Activated B cell treated with CpG ODN at 0.5 μM for 24 hours (primary cell): ENCODE measurements at regions of chr4 and their contacts with region 1.

Region 1: DNA sequence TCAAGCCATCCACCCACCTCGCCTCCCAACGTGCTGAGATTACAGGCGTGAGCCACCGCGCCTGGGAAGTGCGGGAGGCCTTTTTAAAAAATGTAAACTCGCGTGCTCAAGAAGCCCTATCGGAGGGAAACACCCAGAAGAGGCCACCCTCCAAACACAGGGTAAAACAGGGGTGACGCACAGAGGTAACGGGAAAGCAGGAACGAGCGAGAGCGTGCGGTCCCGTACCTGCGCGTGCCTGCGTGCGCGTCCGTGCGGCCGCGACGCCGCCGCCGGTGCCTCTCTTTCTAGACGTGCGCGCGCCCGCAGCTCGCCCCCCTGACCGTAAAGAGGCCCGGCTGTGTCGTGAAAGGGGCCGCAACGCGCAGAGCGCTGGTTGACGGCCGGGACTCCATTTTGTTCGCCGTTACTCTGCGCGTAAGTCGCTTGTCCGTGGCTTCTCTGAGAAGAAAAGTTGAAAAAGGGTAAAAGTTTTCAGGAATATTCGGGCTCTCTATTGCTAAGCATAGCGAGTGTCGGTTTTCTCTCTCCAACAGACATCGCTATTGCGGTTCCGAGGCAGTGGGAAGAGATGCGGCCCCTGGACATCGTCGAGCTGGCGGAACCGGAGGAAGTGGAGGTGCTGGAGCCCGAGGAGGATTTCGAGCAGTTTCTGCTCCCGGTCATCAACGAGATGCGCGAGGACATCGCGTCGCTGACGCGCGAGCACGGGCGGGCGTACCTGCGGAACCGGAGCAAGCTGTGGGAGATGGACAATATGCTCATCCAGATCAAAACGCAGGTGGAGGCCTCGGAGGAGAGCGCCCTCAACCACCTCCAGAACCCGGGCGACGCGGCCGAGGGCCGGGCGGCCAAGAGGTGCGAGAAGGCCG is at the start of gene MRFAP1:
- DNase-seq: peak; percentile 91
- ATAC-seq: peak; percentile 84
- H3K4me3 Mint-ChIP-seq: peak within 1 kb of the TSS; percentile 99
- H3K27ac Mint-ChIP-seq: peak within 1 kb of the TSS; percentile 100
- H3K4me1 Mint-ChIP-seq: peaks cover 36% of the 10 kb centered on the region
- H3K27me3 Mint-ChIP-seq: no peaks in the 10 kb centered on the region
- CTCF ChIP-seq: no peak
- total RNA-seq, gene MRFAP1: 93.8 and 93.9 TPM in 2 replicates

Region 2: DNA sequence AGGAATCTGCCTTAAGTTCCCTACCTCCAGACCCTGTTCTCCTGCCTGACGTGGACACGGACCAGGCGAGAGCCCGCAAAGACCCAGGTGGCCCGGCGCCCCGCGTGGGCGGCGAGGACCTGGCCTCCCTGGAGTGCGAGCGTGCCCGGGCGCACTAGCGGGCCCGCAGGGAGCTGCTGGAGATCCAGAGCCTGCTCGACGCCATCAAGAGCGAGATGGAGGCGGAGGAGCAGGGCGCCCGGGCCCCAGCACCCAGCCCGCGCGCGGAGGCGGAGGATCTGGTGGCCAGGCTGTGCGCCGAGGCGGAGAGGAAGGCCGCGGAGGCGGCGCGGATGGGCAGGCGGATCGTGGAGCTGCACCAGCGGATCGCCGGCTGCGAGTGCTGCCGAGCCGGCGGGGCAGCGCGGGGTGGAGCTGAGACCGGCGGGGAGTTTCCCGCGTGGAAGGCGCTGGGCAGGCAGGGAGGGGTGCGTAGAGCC is 18.1 kb after region 1 on chr4:
- CTCF ChIA-PET with region 1: no interaction called
- POLR2A ChIA-PET with region 1: interaction called, 29 read pairs
- intact Hi-C with region 1: loop called (anchors 2 kb)
- DNase-seq: no peak
- ATAC-seq: peak; percentile 81
- H3K4me3 Mint-ChIP-seq: peak overlapping the region; percentile 71
- H3K27ac Mint-ChIP-seq: no peak overlapping the region
- H3K4me1 Mint-ChIP-seq: peaks cover 3% of the 10 kb centered on the region
- H3K27me3 Mint-ChIP-seq: peaks cover 18% of the 10 kb centered on the region
- CTCF ChIP-seq: no peak

Region 3: GRCh38 chr4:6709230-6710114 is 68.9 kb after region 1 on chr4 and contains the start of gene MRFAP1L1:
- CTCF ChIA-PET with region 1: no interaction called
- POLR2A ChIA-PET with region 1: interaction called, 57 read pairs
- intact Hi-C with region 1: loop called (anchors 1 kb)
- DNase-seq: peak; percentile 93
- ATAC-seq: peak; percentile 84
- H3K4me3 Mint-ChIP-seq: peak within 1 kb of the TSS; percentile 99
- H3K27ac Mint-ChIP-seq: peak within 1 kb of the TSS; percentile 96
- H3K4me1 Mint-ChIP-seq: peaks cover 64% of the 10 kb centered on the region
- H3K27me3 Mint-ChIP-seq: peaks cover 3% of the 10 kb centered on the region
- CTCF ChIP-seq: no peak
- total RNA-seq, gene MRFAP1L1: 39.1 and 39.5 TPM in 2 replicates

Region 4: DNA sequence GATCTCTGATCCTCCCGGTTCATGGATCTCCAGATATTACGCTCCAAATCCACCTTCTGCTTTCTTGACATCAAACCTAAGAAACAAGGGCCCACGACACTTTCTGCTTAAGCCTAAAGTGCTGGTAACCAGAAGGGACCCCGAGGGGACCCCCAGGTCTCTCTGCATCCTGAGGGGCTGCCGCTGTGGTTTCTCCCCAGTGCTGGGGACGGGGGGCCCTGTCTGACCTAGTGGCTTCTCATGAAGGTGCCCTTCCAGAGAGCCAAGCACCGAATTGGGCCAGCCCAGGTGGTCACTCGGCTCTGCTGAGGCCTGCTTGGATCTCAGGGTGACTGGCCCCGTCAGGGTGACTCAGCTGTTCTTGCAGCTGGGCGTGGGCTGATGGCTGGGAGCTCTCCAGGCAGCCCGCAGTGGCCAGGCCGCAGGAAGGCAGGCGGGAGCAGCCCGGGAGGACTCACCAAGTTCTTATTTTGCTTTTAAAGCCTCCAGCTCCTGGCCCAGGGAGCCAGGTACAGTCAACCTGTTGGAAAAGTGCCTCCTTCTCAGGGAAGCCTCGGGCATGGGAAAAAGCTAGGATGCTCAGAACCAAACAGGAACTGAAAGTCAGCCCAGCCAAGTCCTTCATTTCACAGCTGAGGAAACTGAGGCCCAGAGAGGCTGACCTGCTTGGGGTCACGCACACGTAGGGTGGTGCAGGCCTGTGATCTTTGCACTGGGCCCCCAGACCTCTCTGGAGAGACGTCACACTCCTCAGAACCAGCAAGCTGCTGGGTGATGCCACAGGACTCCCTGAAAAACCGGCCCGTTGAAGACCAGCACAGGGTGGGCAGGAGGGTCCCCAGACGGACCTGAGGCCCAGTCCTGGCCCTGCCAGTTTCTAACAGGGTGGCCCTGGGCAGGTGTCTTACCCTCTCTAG is 92.2 kb after region 1 on chr4:
- CTCF ChIA-PET with region 1: no interaction called
- POLR2A ChIA-PET with region 1: no interaction called
- intact Hi-C with region 1: no loop called
- DNase-seq: no peak
- ATAC-seq: no peak
- H3K4me3 Mint-ChIP-seq: no peak overlapping the region
- H3K27ac Mint-ChIP-seq: no peak overlapping the region
- H3K4me1 Mint-ChIP-seq: no peaks in the 10 kb centered on the region
- H3K27me3 Mint-ChIP-seq: peaks cover 16% of the 10 kb centered on the region
- CTCF ChIP-seq: no peak

Region 5: DNA sequence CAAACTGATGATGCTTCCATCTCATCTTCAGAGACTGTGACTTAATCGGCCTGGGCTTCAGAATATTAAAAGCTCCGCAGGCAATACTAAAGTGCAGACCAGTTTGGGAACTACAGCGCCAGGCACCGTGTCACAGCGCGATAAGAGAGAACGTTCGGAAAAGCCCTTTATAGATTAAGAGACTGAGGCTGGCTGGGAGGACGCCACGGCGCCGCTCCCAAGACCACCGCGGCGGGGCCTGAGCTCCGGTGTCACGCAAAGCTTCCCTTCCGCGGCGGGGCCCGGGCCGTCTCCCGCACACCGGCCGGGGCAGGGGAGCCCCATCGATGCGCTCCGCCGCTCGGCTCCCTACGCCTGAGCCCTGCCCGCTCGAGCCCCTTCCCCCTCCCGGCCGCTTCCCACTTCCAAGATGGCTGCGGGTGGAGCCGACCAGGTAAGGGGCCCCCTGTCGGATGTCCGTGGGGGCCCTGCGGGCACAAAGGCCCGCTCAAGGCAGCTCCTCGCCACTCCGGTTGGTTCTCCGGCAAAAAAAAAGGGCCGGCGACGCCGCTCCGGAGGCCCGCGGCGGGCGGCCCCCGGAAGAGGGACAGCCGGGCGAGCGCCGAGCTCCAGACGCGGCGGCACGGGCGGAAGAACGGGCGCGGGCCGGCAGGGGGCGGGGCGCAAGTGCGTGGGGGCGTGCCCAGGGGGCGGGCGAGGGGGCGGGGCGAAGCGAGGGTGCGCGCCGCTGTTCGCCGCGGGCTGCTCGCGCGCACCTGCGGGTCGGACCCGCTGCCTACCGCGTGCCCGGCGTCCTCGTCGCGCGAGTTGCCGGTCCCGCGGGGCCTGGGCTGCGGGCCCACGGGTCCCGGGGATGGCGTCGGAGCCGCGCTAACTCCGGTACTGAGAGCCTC is 268.8 kb after region 1 on chr4 and contains the start of gene TBC1D14:
- CTCF ChIA-PET with region 1: no interaction called
- POLR2A ChIA-PET with region 1: interaction called, 16 read pairs
- intact Hi-C with region 1: loop called (anchors 1 kb)
- DNase-seq: peak; percentile 88
- ATAC-seq: peak; percentile 89
- H3K4me3 Mint-ChIP-seq: peak within 1 kb of the TSS; percentile 87
- H3K27ac Mint-ChIP-seq: peak within 1 kb of the TSS; percentile 86
- H3K4me1 Mint-ChIP-seq: peaks cover 43% of the 10 kb centered on the region
- H3K27me3 Mint-ChIP-seq: peaks cover 5% of the 10 kb centered on the region
- CTCF ChIP-seq: no peak
- total RNA-seq, gene TBC1D14: 35.1 and 35.2 TPM in 2 replicates